SK-N-SH (cell line): ENCODE measurements at regions of chr20 and their contacts with region 1.

Region 1: DNA sequence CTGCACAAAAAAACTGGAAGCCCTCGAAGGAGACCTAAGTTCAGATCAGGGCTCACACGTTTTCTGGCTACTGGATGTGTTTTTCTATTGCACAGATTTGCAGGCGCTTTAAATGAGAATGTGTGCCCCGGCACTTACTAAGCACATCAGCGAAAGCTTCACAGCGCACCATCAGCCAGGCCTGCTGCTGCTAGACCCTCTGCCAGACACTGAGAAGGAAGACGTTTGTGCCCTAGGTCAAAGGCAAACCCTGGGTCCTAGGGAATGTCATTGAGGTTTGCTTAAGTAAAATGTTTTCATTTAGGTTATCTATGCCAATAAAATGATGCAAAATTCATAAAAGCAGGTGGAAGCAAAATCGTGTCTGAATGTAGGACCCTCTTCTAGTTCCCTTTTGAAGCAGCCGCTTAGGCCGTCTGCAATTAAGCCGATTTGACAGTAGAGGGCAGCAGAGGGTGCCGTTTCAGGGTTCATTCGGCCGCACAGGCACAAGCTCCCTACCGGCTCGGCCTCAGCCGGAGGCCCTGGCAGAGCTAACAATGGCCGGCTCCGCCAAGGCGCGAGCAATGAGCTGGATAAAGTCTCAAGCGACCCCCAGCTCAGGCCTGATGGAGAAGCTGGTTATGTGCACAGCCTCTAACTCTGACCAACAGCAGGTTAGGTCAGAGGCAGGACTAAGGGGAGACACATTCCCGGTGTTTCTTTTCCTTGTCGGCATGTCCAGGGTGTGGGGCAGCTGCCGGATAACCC is 107.2 kb upstream of the FOXA2 start:
- DNase-seq: peak; percentile 72
- H3K4me3 ChIP-seq: no peak overlapping the region; a peak in 1 of 4 replicates
- H3K27ac ChIP-seq: no peak overlapping the region
- H3K4me1 ChIP-seq: peaks cover 0 to 3% of the 10 kb centered on the region in 2 experiments; a peak in 1 of 4 replicates
- H3K27me3 ChIP-seq: peaks cover 8% of the 10 kb centered on the region; the same call in 1 of the 2 replicates
- CTCF ChIP-seq: peak; percentile 88
- EP300 ChIP-seq: no peak
- RAD21 ChIP-seq: peak; percentile 80

Region 2: DNA sequence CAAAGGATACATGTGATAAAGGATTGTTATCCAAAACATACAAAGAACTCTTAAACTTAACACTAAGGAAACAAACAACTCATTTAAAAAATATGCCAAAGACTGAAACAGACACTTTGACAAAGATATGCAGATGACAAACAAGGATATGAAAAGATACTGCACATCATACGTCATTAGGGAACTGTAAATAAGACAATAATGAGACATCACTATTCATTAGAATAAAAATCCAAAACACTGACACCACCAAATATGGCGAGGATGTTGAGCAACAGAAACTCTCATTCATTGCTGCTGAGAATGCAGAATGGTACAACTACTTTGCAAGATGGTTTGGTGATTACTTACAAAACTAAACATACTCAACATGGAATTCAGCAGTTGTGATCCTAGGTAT is 49.3 kb after region 1 on chr20:
- CTCF ChIA-PET with region 1: no interaction called
- POLR2A ChIA-PET with region 1: no interaction called
- DNase-seq: no peak
- H3K4me3 ChIP-seq: no peak overlapping the region
- H3K27ac ChIP-seq: no peak overlapping the region
- H3K4me1 ChIP-seq: no peaks in the 10 kb centered on the region
- H3K27me3 ChIP-seq: no peaks in the 10 kb centered on the region
- CTCF ChIP-seq: no peak
- EP300 ChIP-seq: no peak
- RAD21 ChIP-seq: no peak

Region 3: GRCh38 chr20:23200918-23201317 is 509.4 kb after region 1 on chr20:
- CTCF ChIA-PET with region 1: interaction called, 10 read pairs
- POLR2A ChIA-PET with region 1: no interaction called
- DNase-seq: peak; percentile 16
- H3K4me3 ChIP-seq: no peak overlapping the region
- H3K27ac ChIP-seq: no peak overlapping the region
- H3K4me1 ChIP-seq: no peaks in the 10 kb centered on the region
- H3K27me3 ChIP-seq: peaks cover 80% of the 10 kb centered on the region
- CTCF ChIP-seq: peak; percentile 51
- EP300 ChIP-seq: no peak
- RAD21 ChIP-seq: peak; percentile 46

Region 4: DNA sequence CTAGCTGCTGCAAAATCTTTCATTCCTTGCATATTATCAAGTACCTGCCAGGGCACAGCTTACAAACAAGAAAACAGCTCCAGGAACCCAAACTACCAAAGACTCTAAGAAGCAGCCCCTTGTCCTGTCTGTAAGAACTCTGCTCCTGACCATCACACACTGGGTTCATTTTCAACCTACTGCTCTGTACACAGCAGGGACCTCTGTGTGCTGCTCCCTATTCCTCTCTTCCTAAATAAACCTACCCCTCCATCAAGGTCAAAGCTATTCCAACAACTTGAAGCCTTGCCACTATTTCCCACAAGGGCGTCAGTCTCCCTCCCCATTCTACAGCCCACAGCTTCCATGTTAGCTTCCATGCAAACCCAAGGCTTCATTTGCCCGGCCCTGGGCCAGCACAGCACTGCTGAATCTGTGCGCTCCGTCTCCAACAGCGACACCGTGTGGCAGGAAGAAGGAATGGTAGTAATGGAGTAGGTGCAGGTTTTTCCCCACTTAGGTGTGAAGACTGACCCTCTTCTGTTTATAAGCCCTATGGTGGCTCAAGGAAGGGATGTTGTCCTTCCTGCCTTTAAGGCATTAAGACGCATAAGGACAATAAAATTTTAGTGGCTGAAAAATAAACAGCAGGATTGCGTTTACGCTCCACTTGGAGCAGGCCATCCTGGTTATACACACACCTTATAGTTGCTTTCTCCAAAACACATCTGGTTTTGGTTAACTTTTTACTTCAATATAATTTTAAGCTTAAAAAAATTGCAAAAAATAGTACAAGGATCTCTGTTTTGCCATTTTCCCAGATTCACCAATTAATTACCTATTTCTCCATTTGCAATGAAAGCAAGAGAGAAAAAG is 543.9 kb after region 1 on chr20:
- CTCF ChIA-PET with region 1: interaction called, 10 read pairs
- POLR2A ChIA-PET with region 1: no interaction called
- DNase-seq: peak; percentile 44
- H3K4me3 ChIP-seq: no peak overlapping the region; a peak in 1 of 4 replicates
- H3K27ac ChIP-seq: no peak overlapping the region
- H3K4me1 ChIP-seq: no peaks in the 10 kb centered on the region
- H3K27me3 ChIP-seq: no peaks in the 10 kb centered on the region; the same call in 1 of the 2 replicates
- CTCF ChIP-seq: peak; percentile 68
- EP300 ChIP-seq: no peak
- RAD21 ChIP-seq: peak; percentile 54

Region 5: DNA sequence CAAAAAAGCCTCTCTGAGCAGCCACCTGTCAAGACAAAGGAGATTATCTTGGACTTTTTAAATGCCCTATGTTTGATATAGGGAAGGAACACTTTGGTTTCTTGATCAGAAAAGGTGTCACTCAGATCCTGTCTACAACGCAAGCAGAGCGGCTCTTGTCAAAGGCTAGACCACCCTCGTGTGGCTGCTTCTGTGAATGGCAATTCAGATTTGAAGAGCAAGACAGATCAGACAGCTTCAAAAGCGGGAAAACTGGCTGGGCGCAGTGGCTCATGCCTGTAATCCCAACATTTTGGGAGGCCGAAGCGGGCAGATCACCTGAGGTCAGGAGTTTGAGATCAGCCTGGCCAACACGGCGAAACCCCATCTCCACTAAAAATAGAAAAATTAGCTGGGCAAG is 649.0 kb after region 1 on chr20:
- CTCF ChIA-PET with region 1: interaction called, 131 read pairs
- POLR2A ChIA-PET with region 1: no interaction called
- DNase-seq: peak; percentile 67
- H3K4me3 ChIP-seq: no peak overlapping the region
- H3K27ac ChIP-seq: no peak overlapping the region
- H3K4me1 ChIP-seq: no peaks in the 10 kb centered on the region; a peak in 1 of 4 replicates
- H3K27me3 ChIP-seq: peaks cover 31% of the 10 kb centered on the region; the same call in 1 of the 2 replicates
- CTCF ChIP-seq: peak; percentile 76
- EP300 ChIP-seq: no peak
- RAD21 ChIP-seq: peak; percentile 89